ENCODE measurements at regions of chr19 and their contacts with region 1.

Region 1: GRCh38 chr19:6048808-6049405 is 61.4 kb downstream of the RFX2 start:
- H3K4me3 Mint-ChIP-seq: no peak overlapping the region
- H3K27ac Mint-ChIP-seq: no peak overlapping the region
- H3K4me1 Mint-ChIP-seq: peaks cover 5% of the 10 kb centered on the region
- H3K27me3 Mint-ChIP-seq: no peaks in the 10 kb centered on the region

Region 2: GRCh38 chr19:6010107-6010506 is 38.8 kb before region 1 on chr19:
- intact Hi-C with region 1: no loop called
- H3K4me3 Mint-ChIP-seq: no peak overlapping the region
- H3K27ac Mint-ChIP-seq: no peak overlapping the region
- H3K4me1 Mint-ChIP-seq: no peaks in the 10 kb centered on the region
- H3K27me3 Mint-ChIP-seq: no peaks in the 10 kb centered on the region

Region 3: DNA sequence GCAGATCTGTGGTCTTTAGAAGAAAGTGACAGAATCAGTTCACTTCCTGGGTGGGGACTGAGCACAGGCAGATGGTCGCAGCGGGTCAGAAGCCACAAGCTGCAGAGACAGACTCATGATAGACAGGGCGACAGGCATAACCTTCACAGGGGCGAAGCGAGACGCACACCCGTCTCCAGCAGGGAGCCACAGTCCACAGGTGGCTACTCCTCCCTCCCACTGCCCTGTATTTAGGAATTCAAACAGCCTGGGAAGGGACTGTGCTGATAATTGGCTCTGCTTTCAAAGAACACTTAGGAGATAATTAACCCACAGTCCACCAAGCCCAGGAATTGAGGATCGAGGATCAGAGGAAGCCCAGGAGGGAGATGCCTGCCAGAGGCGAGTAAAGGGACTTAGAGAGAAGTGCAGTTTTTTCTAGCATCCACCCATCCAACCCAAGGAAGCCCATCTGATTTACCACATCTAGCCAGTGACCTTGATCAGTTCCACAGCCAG is 38.2 kb after region 1 on chr19:
- intact Hi-C with region 1: loop called (anchors 5 kb)
- H3K4me3 Mint-ChIP-seq: peak overlapping the region; percentile 11
- H3K27ac Mint-ChIP-seq: peak overlapping the region; percentile 96
- H3K4me1 Mint-ChIP-seq: peaks cover 31% of the 10 kb centered on the region
- H3K27me3 Mint-ChIP-seq: no peaks in the 10 kb centered on the region

Region 4: GRCh38 chr19:6125571-6125989 is 76.7 kb after region 1 on chr19:
- intact Hi-C with region 1: loop called (anchors 1 kb)
- H3K4me3 Mint-ChIP-seq: no peak overlapping the region
- H3K27ac Mint-ChIP-seq: no peak overlapping the region
- H3K4me1 Mint-ChIP-seq: no peaks in the 10 kb centered on the region
- H3K27me3 Mint-ChIP-seq: peaks cover 5% of the 10 kb centered on the region

Region 5: DNA sequence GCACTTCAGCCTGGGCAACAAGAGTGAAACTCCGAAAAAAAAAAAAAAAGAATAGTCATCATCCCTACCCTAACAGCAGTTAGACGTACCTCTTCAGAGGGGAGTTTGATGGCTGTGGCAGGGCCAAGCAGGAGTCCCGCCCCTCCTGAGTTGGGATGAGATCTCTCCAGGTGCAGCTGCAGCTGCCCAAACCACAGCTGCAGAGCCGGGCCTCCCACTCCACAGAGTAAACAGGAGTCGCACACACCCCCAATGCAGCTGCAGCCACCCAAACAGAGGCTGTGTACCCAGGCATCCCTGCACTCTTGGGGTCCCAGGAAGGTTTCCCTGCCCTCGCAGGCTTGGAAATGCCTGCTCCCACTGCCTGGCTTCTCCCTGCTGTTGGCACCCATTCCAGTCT is 248.3 kb after region 1 on chr19:
- intact Hi-C with region 1: loop called (anchors 5 kb)
- H3K4me3 Mint-ChIP-seq: no peak overlapping the region
- H3K27ac Mint-ChIP-seq: no peak overlapping the region
- H3K4me1 Mint-ChIP-seq: no peaks in the 10 kb centered on the region
- H3K27me3 Mint-ChIP-seq: peaks cover 5% of the 10 kb centered on the region